A673 (cell line): ENCODE measurements at regions of chr4 and their contacts with region 1.

Region 1: GRCh38 chr4:122577808-122578781 is 42.8 kb downstream of the IL21 start:
- DNase-seq: peak; percentile 68
- H3K4me3 ChIP-seq: no peak overlapping the region
- H3K27ac ChIP-seq: no peak overlapping the region
- H3K4me1 ChIP-seq: no peaks in the 10 kb centered on the region
- H3K27me3 ChIP-seq: no peaks in the 10 kb centered on the region
- CTCF ChIP-seq: peak; percentile 80

Region 2: DNA sequence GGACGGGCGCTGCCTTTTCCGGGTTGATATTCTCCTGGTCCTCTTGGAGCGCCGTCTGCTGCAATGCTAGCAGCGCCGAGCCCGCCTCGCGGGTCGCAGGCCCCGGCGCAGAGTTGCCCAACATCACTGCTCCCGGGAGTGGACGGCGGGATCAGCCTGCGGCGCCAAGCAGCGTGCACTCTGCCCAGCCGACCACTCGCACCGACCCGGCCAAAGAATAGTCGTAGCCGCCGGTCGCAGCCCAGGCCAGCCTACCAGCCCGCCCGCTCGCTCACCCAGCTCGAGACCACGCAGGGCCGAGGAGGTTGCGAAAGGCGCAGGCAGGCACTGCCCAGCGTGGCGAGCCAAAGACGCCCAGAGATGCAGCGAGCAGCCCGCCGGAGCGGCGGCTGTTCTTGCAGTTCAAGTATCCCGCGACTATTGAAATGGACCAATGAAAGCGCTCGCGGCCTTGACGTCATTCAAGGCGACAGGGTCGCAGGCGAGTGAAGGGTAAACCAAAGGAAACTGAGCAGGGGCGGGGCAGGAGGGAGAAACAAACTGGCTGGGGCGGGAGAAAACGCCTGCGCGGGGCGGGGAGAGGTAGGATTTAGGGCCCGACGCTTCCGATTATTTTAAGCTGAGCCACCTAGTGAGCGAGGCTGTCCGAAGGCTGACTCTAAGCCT is 754.5 kb before region 1 on chr4 and contains the start of gene CCNA2:
- CTCF ChIA-PET with region 1: no interaction called
- POLR2A ChIA-PET with region 1: no interaction called
- intact Hi-C with region 1: loop called (anchors 5 kb)
- DNase-seq: peak; percentile 99
- H3K4me3 ChIP-seq: peak within 1 kb of the TSS; percentile 96
- H3K27ac ChIP-seq: peak within 1 kb of the TSS; percentile 92
- H3K4me1 ChIP-seq: peaks cover 22% of the 10 kb centered on the region
- H3K27me3 ChIP-seq: no peaks in the 10 kb centered on the region
- CTCF ChIP-seq: 0 out of 2 replicates have a peak, but pooled peaks have one; percentile 12
- total RNA-seq, gene CCNA2: 99.0 and 105 TPM in 2 replicates

Region 3: DNA sequence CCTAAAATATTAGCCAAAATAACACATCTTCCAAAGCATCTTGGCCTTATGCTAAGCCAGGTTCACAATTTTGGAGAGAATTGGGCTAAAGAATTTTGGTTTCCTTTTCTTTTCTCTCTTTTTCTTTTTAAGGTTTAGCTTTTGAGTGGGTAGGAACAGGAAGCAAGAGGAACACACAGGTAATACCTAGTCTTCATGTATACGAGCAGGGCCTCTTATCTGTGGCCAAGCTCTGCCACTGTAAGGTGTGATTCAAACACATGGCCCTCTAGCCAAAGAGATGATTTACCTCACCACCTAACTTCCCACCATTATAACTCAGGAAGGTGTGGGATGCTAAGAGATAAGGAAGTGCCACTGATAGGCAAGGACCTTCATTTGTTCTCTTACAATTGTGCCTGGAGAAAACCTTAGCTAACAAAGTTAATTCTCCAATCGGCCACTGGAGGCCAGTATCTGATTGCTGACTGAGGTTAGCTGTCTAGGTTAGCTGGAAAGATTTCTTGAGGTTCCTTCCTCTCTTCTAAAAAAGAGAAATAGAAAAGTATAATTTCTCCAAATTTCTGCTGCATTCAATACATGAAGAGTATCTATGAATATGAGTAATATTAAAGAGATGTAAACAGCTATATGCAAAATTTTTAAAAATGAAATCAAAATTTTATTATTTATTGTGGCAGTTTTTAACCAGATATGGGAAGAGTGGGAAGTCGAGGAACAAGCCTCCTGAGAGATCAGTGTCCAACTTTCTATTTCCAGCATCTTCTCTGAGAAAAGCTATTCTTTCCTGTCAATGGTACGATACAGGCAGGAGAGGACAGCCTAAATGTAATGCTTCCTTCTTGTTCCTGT is 677.7 kb before region 1 on chr4:
- CTCF ChIA-PET with region 1: interaction called, 7 read pairs
- POLR2A ChIA-PET with region 1: no interaction called
- intact Hi-C with region 1: loop called (anchors 2 kb)
- DNase-seq: peak; percentile 65
- H3K4me3 ChIP-seq: no peak overlapping the region
- H3K27ac ChIP-seq: no peak overlapping the region
- H3K4me1 ChIP-seq: no peaks in the 10 kb centered on the region
- H3K27me3 ChIP-seq: no peaks in the 10 kb centered on the region
- CTCF ChIP-seq: peak; percentile 73

Region 4: GRCh38 chr4:122203407-122203806 is 374.7 kb before region 1 on chr4:
- CTCF ChIA-PET with region 1: no interaction called
- POLR2A ChIA-PET with region 1: no interaction called
- intact Hi-C with region 1: loop called (anchors 5 kb)
- DNase-seq: no peak
- H3K4me3 ChIP-seq: no peak overlapping the region
- H3K27ac ChIP-seq: no peak overlapping the region
- H3K4me1 ChIP-seq: no peaks in the 10 kb centered on the region
- H3K27me3 ChIP-seq: no peaks in the 10 kb centered on the region
- CTCF ChIP-seq: no peak

Region 5: GRCh38 chr4:122309988-122310626 is 268.0 kb before region 1 on chr4:
- CTCF ChIA-PET with region 1: no interaction called
- POLR2A ChIA-PET with region 1: no interaction called
- intact Hi-C with region 1: loop called (anchors 2 kb)
- DNase-seq: peak; percentile 30
- H3K4me3 ChIP-seq: no peak overlapping the region
- H3K27ac ChIP-seq: no peak overlapping the region
- H3K4me1 ChIP-seq: no peaks in the 10 kb centered on the region
- H3K27me3 ChIP-seq: no peaks in the 10 kb centered on the region
- CTCF ChIP-seq: peak; percentile 68

Region 6: GRCh38 chr4:122548452-122548851 is 29.6 kb before region 1 on chr4:
- CTCF ChIA-PET with region 1: no interaction called
- POLR2A ChIA-PET with region 1: no interaction called
- intact Hi-C with region 1: no loop called
- DNase-seq: no peak
- H3K4me3 ChIP-seq: no peak overlapping the region
- H3K27ac ChIP-seq: no peak overlapping the region
- H3K4me1 ChIP-seq: no peaks in the 10 kb centered on the region
- H3K27me3 ChIP-seq: no peaks in the 10 kb centered on the region
- CTCF ChIP-seq: no peak